GM12878 (cell line): ENCODE measurements at regions of chr5 and their contacts with region 1.

Region 1: GRCh38 chr5:108788142-108788541 is 40.4 kb downstream of the FER start:
- DNase-seq: no peak
- ATAC-seq: no peak
- H3K4me3 ChIP-seq: no peak overlapping the region
- H3K27ac ChIP-seq: no peak overlapping the region
- H3K4me1 ChIP-seq: no peaks in the 10 kb centered on the region
- H3K27me3 ChIP-seq: no peaks in the 10 kb centered on the region
- CTCF ChIP-seq: no peak
- EP300 ChIP-seq: no peak
- POLR2A ChIP-seq: no peak
- RAD21 ChIP-seq: no peak

Region 2: GRCh38 chr5:108769352-108769751 is 18.8 kb before region 1 on chr5:
- CTCF ChIA-PET with region 1: no interaction called
- POLR2A ChIA-PET with region 1: no interaction called
- RAD21 ChIA-PET with region 1: interaction called, 3 read pairs
- SMC1A ChIA-PET with region 1: interaction called, 16 read pairs
- in situ Hi-C with region 1: no loop called
- intact Hi-C with region 1: no loop called
- DNase-seq: no peak
- ATAC-seq: peak; percentile 77
- H3K4me3 ChIP-seq: peak overlapping the region; percentile 23; the same call in 1 of the 2 replicates
- H3K27ac ChIP-seq: peak overlapping the region; percentile 50
- H3K4me1 ChIP-seq: peaks cover 4% of the 10 kb centered on the region
- H3K27me3 ChIP-seq: no peaks in the 10 kb centered on the region
- CTCF ChIP-seq: no peak
- EP300 ChIP-seq: no peak
- POLR2A ChIP-seq: no peak
- RAD21 ChIP-seq: no peak